H1 (cell line): ENCODE measurements at regions of chr2 and their contacts with region 1.

Region 1: GRCh38 chr2:20561701-20562454 is 89.0 kb downstream of the HS1BP3 start:
- DNase-seq: no peak
- H3K4me3 ChIP-seq: no peak overlapping the region
- H3K27ac ChIP-seq: no peak overlapping the region
- H3K4me1 ChIP-seq: peaks cover 6 to 19% (median 11%) of the 10 kb centered on the region in 4 experiments; a peak in 6 of 7 replicates
- H3K27me3 ChIP-seq: no peaks in the 10 kb centered on the region; a peak in 2 of 7 replicates
- CTCF ChIP-seq: no peak
- EP300 ChIP-seq: no peak
- POLR2A ChIP-seq: no peak
- RAD21 ChIP-seq: no peak

Region 2: GRCh38 chr2:20365249-20365817 is 196.5 kb before region 1 on chr2:
- CTCF ChIA-PET with region 1: no interaction called
- POLR2A ChIA-PET with region 1: no interaction called
- DNase-seq: no peak
- H3K4me3 ChIP-seq: no peak overlapping the region
- H3K27ac ChIP-seq: no peak overlapping the region
- H3K4me1 ChIP-seq: no peaks in the 10 kb centered on the region
- H3K27me3 ChIP-seq: no peaks in the 10 kb centered on the region; a peak in 1 of 7 replicates
- CTCF ChIP-seq: no peak
- EP300 ChIP-seq: no peak
- POLR2A ChIP-seq: no peak
- RAD21 ChIP-seq: no peak

Region 3: GRCh38 chr2:20551260-20551944 is 10.5 kb before region 1 on chr2:
- CTCF ChIA-PET with region 1: interaction called, 12 read pairs
- POLR2A ChIA-PET with region 1: interaction called, 3 read pairs
- DNase-seq: no peak
- H3K4me3 ChIP-seq: no peak overlapping the region
- H3K27ac ChIP-seq: no peak overlapping the region
- H3K4me1 ChIP-seq: no peaks in the 10 kb centered on the region
- H3K27me3 ChIP-seq: no peaks in the 10 kb centered on the region; a peak in 1 of 7 replicates
- CTCF ChIP-seq: no peak
- EP300 ChIP-seq: no peak
- POLR2A ChIP-seq: no peak
- RAD21 ChIP-seq: no peak

Region 4: GRCh38 chr2:20578895-20579825 is 17.3 kb after region 1 on chr2:
- CTCF ChIA-PET with region 1: interaction called, 21 read pairs
- POLR2A ChIA-PET with region 1: interaction called, 5 read pairs
- DNase-seq: peak in 1 of 2 experiments; percentile 68
- H3K4me3 ChIP-seq: no peak overlapping the region
- H3K27ac ChIP-seq: no peak overlapping the region
- H3K4me1 ChIP-seq: peaks cover 0 to 3% (median 3%) of the 10 kb centered on the region in 4 experiments; a peak in 6 of 7 replicates
- H3K27me3 ChIP-seq: no peaks in the 10 kb centered on the region; a peak in 1 of 7 replicates
- CTCF ChIP-seq: no peak
- EP300 ChIP-seq: no peak
- POLR2A ChIP-seq: no peak
- RAD21 ChIP-seq: no peak